BJ (cell line): ENCODE measurements at regions of chr1 and their contacts with region 1.

Region 1: DNA sequence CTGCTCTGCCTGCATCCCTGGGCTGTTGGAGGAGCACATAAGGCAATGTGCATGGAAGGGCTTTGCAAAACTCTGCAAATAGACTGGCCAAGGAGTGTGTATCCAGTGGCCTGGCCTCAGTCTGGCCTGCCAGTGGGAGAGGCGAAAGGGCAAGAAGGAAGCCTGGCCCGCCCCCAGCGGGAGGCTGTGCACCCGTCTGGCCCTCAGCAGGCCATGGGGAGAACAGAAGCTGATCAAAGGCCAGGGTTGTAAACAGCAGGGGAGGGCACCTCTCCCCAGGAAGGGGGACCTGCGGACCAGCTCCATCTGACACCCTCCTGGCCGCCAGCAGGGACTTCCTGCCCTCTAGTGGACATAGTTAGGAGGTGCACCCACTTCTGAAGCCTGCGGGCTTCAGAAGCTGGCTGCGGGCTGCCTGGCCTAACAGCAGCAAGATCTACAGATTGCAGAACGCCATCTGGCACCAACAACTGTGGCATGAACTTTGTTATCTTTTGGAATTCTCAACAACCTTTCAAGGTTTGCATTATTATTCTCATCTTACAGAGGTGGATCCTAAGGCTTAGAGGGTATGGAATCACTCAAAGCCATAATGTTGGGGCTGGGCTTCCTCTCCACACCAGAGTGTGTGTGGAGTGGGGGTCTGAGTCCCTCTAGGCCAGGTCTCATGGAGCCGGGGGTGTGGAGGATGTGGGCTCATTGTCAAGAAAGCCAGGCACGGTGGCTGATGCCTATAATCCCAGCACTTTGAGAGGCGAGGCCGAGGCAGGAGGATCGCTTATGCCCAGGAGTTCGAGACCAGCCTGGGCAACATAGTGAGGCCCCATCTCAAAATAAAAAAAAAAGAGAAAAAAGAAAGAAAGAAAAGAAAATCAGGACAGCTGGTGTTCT is 18.9 kb upstream of the CDK18 start:
- DNase-seq: no peak
- H3K4me3 ChIP-seq: no peak overlapping the region
- H3K27me3 ChIP-seq: peaks cover 31% of the 10 kb centered on the region
- CTCF ChIP-seq: peak; percentile 98

Region 2: GRCh38 chr1:205326812-205327466 is 158.6 kb before region 1 on chr1:
- CTCF ChIA-PET with region 1: interaction called, 11 read pairs
- POLR2A ChIA-PET with region 1: no interaction called
- DNase-seq: no peak
- H3K4me3 ChIP-seq: no peak overlapping the region
- H3K27me3 ChIP-seq: peaks cover 15% of the 10 kb centered on the region
- CTCF ChIP-seq: no peak

Region 3: DNA sequence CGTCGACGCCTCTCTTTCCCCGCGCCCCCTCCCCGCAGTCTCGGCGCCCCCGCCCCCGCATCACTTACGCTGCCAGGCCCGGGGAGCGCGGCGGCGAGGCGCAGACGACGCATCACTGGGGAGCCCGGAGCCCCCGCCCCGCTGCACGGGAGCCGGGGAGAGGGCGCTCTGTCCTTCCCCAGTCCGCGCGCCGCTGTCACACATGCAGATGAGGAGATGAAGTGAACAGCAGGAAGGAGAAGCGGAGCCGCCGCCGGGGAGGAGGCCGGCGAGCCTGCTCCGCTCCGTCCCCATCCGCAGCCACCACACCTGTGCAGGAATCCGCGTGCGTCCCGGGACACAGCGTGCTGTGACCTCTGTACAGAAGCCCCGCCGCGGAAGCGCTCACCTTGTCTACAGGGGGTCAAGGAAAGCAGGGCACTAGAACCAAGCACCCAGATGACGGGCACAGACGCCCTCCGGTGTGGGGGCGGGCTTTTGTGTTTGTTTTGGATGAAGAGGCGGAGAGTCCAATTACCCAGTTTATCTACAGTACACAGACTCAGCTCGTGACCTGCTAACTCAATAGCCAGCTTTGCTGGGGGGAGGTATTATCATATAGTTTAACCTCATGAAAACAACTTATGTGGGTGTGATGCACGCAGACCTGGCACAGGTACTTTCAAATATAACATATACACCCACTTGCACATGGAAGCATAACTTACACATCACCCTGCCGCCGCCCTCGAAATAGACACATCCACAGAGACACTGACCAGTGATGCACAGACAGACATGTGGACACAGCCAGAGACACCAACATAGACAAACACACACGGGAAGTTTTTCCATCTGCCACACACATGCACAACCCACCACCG is 141.3 kb before region 1 on chr1:
- CTCF ChIA-PET with region 1: interaction called, 11 read pairs
- POLR2A ChIA-PET with region 1: no interaction called
- DNase-seq: no peak
- H3K4me3 ChIP-seq: peak overlapping the region; percentile 14
- H3K27me3 ChIP-seq: peaks cover 51% of the 10 kb centered on the region
- CTCF ChIP-seq: no peak

Region 4: GRCh38 chr1:205396967-205397616 is 88.5 kb before region 1 on chr1:
- CTCF ChIA-PET with region 1: interaction called, 65 read pairs
- POLR2A ChIA-PET with region 1: no interaction called
- DNase-seq: no peak
- H3K4me3 ChIP-seq: no peak overlapping the region
- H3K27me3 ChIP-seq: no peaks in the 10 kb centered on the region
- CTCF ChIP-seq: peak; percentile 54

Region 5: GRCh38 chr1:205440476-205441317 is 44.9 kb before region 1 on chr1:
- CTCF ChIA-PET with region 1: interaction called, 11 read pairs
- POLR2A ChIA-PET with region 1: no interaction called
- DNase-seq: no peak
- H3K4me3 ChIP-seq: no peak overlapping the region
- H3K27me3 ChIP-seq: peaks cover 36% of the 10 kb centered on the region
- CTCF ChIP-seq: no peak

Region 6: GRCh38 chr1:205528887-205529825 is 43.6 kb after region 1 on chr1:
- CTCF ChIA-PET with region 1: interaction called, 819 read pairs
- POLR2A ChIA-PET with region 1: no interaction called
- DNase-seq: no peak
- H3K4me3 ChIP-seq: peak overlapping the region; percentile 37
- H3K27me3 ChIP-seq: no peaks in the 10 kb centered on the region; the same call in 1 of the 2 replicates
- CTCF ChIP-seq: peak; percentile 96